ENCODE measurements at regions of chr18 and their contacts with region 1.

Region 1: GRCh38 chr18:25099895-25100294 is 252.1 kb downstream of the ZNF521 start:
- DNase-seq: no peak
- H3K4me3 Mint-ChIP-seq: no peak overlapping the region
- H3K27ac Mint-ChIP-seq: no peak overlapping the region
- H3K4me1 Mint-ChIP-seq: no peaks in the 10 kb centered on the region
- H3K27me3 Mint-ChIP-seq: peaks cover 7% of the 10 kb centered on the region

Region 2: GRCh38 chr18:25144820-25145219 is 44.9 kb after region 1 on chr18:
- CTCF ChIA-PET with region 1: no interaction called
- intact Hi-C with region 1: loop called (anchors 10 kb)
- DNase-seq: no peak
- H3K4me3 Mint-ChIP-seq: no peak overlapping the region
- H3K27ac Mint-ChIP-seq: no peak overlapping the region
- H3K4me1 Mint-ChIP-seq: no peaks in the 10 kb centered on the region
- H3K27me3 Mint-ChIP-seq: no peaks in the 10 kb centered on the region

Region 3: DNA sequence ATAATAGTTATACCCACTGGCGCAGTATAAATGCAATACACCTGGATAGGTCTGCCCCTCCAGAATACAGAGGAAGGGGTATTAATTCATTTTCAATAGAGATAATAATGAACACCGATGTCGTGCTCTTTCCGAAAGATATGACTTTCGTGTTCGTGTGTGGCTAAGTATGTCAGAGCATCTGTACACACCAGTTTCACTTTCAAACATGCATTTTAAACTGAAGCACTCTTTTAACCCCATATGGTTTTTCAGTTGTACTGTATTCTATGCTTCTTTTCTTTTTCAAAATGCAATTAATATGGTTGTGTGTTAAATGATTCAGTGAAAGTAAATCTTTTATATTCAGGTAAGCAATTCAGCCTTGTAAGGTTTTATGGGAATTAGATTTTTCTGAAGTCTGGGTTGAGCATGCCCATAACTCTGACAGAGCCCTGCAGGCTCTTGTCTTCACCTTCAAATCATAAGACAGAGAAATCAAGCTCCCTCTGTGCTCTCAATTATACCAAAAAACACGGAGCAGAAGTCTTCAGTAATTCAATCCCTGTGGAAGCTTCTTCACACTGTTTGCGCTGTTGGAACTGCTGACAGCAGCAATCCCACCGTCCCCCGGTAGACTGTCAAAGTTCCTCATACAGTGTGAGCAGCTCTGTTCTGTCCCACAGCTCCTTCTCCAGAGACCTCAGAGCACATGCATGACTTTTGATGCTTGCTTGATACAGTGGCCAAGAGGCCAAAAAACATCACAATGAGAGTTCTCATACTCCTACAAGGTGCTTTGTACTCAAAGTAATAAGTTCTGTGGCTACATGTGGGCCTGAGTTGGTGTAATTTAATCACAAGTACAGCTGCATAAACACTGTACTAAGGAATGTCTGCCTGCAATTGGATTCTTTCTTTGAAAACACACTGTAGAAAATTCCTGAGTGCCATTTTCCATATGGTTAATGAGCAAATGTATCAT is 65.2 kb after region 1 on chr18:
- CTCF ChIA-PET with region 1: no interaction called
- intact Hi-C with region 1: no loop called
- DNase-seq: no peak
- H3K4me3 Mint-ChIP-seq: peak overlapping the region; percentile 7
- H3K27ac Mint-ChIP-seq: no peak overlapping the region
- H3K4me1 Mint-ChIP-seq: peaks cover 18% of the 10 kb centered on the region
- H3K27me3 Mint-ChIP-seq: peaks cover 10% of the 10 kb centered on the region

Measured in activated naive CD4-positive, alpha-beta T cell treated with anti-CD3 and anti-CD28 coated beads for 36 hours (primary cell).